SK-N-SH (cell line): ENCODE measurements at regions of chr15 and their contacts with region 1.

Region 1: GRCh38 chr15:86231864-86232721 is 152.4 kb downstream of the AGBL1 start:
- DNase-seq: peak; percentile 65
- H3K4me3 ChIP-seq: peak overlapping the region in 1 of 2 experiments; percentile 22; a peak in 1 of 4 replicates
- H3K27ac ChIP-seq: no peak overlapping the region
- H3K4me1 ChIP-seq: peaks cover 0 to 8% of the 10 kb centered on the region in 2 experiments; a peak in 1 of 4 replicates
- H3K27me3 ChIP-seq: no peaks in the 10 kb centered on the region
- CTCF ChIP-seq: peak; percentile 69
- EP300 ChIP-seq: no peak
- RAD21 ChIP-seq: peak; percentile 84

Region 2: GRCh38 chr15:85380217-85380811 is 851.8 kb before region 1 on chr15 and contains the start of gene AKAP13:
- CTCF ChIA-PET with region 1: no interaction called
- POLR2A ChIA-PET with region 1: no interaction called
- DNase-seq: peak; percentile 95
- H3K4me3 ChIP-seq: peak within 1 kb of the TSS; percentile 79 to 81
- H3K27ac ChIP-seq: peak within 1 kb of the TSS; percentile 87 to 92
- H3K4me1 ChIP-seq: peaks cover 6 to 12% of the 10 kb centered on the region in 2 experiments; a peak in 3 of 4 replicates
- H3K27me3 ChIP-seq: no peaks in the 10 kb centered on the region
- CTCF ChIP-seq: no peak
- EP300 ChIP-seq: peak in 1 of 2 experiments; percentile 33; a peak in 1 of 4 replicates
- RAD21 ChIP-seq: no peak
- polyA plus RNA-seq, gene AKAP13: 6.7 and 8.4 TPM in 2 replicates

Region 3: DNA sequence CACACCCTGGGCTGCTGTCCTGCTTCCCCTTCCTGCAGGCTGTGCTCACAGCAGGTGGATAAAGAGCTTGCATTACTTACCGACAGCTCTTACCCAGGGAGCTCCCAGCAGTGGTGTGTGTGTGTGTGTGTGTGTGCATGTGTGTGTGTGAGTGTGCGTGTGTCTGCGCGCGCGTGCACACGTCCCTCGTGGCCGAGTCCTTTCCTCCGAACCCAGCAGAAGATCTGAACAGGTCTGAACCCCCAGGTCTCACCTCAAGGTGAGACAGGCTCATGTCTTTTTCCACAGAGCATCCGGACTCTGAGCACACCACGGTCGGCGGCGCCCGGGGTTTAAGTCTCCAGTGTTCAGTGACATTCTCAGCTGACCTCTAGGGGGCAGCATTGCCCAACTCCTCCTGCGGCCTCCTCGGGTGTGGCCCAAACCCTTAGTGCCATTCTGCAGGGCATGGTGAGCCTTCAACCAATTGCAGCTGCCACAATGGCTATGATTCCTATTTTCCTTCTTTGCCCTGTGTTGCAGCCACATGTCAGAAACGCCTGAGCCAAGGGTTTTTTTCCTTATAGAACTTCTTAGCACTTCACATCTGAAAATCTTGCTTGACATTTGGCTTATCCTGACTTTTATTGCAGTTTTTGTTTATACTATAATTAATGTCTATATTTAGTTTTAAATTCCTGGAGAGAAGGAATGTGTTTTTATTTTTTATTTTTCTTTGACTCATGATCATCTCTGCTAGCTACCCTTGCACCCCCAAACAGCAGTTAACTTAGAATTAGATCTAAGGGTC is 373.3 kb before region 1 on chr15:
- CTCF ChIA-PET with region 1: interaction called, 21 read pairs
- POLR2A ChIA-PET with region 1: no interaction called
- DNase-seq: peak; percentile 83
- H3K4me3 ChIP-seq: peak overlapping the region in 1 of 2 experiments; percentile 48; a peak in 2 of 4 replicates
- H3K27ac ChIP-seq: no peak overlapping the region
- H3K4me1 ChIP-seq: peaks cover 0 to 2% of the 10 kb centered on the region in 2 experiments; a peak in 1 of 4 replicates
- H3K27me3 ChIP-seq: no peaks in the 10 kb centered on the region; the same call in 1 of the 2 replicates
- CTCF ChIP-seq: peak; percentile 86
- EP300 ChIP-seq: no peak
- RAD21 ChIP-seq: peak; percentile 76

Region 4: DNA sequence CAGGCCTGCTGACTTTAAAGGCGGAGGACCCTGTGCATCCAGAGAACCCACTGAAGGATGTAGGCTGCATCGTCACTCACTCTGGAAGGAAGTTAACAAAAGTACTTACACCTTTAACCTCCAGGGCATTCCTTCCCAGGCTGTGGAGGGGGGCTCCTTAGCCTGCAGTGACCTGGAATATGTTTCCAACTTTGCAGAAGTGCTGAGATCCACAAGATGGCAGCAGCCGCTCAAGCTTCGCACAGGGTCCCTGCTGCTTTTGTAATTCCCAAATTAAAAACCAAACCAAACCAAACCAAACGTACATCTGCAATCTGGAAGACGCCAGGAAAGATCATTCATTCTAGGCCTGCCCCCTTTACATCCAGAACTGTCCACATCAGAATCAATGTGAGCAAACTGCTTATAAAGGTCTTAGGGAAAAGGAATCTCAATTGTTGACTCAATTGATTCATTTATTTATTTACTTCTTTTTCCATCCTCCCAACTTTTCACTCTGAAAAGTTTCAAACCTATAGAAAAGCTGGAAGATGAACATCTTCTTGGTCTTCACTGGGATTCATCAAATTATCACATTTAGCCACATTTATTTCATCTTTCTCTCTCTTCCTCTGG is 366.9 kb before region 1 on chr15:
- CTCF ChIA-PET with region 1: interaction called, 21 read pairs
- POLR2A ChIA-PET with region 1: no interaction called
- DNase-seq: peak; percentile 71
- H3K4me3 ChIP-seq: peak overlapping the region in 1 of 2 experiments; percentile 34; a peak in 1 of 4 replicates
- H3K27ac ChIP-seq: no peak overlapping the region
- H3K4me1 ChIP-seq: no peaks in the 10 kb centered on the region
- H3K27me3 ChIP-seq: no peaks in the 10 kb centered on the region
- CTCF ChIP-seq: peak; percentile 86
- EP300 ChIP-seq: no peak
- RAD21 ChIP-seq: peak; percentile 98

Region 5: DNA sequence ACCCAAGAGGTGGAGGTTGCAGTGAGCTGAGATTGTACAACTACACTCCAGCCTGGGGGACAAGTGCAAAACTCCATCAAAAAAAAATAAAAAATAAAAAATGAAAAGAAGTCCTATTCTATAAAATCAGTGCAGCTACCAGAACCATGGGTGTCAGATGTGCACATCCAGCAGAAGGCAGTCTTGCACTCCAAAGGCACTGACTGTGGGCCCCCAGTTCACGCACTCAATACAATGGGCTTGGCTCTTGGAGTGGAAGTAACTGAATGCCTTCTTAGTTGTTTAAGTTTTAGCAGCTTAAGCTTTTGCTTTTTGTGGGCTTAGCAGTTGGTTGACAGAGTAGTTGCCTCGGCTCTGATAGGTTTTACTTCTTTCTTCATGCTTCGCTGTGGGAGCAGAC is 11.0 kb before region 1 on chr15:
- CTCF ChIA-PET with region 1: interaction called, 21 read pairs
- POLR2A ChIA-PET with region 1: no interaction called
- DNase-seq: no peak
- H3K4me3 ChIP-seq: no peak overlapping the region
- H3K27ac ChIP-seq: no peak overlapping the region
- H3K4me1 ChIP-seq: no peaks in the 10 kb centered on the region
- H3K27me3 ChIP-seq: no peaks in the 10 kb centered on the region; the same call in 1 of the 2 replicates
- CTCF ChIP-seq: no peak
- EP300 ChIP-seq: no peak
- RAD21 ChIP-seq: no peak

Region 6: GRCh38 chr15:86247249-86247955 is 15.3 kb after region 1 on chr15:
- CTCF ChIA-PET with region 1: interaction called, 23 read pairs
- POLR2A ChIA-PET with region 1: no interaction called
- DNase-seq: no peak
- H3K4me3 ChIP-seq: no peak overlapping the region
- H3K27ac ChIP-seq: no peak overlapping the region
- H3K4me1 ChIP-seq: no peaks in the 10 kb centered on the region
- H3K27me3 ChIP-seq: no peaks in the 10 kb centered on the region
- CTCF ChIP-seq: no peak
- EP300 ChIP-seq: no peak
- RAD21 ChIP-seq: no peak

Region 7: DNA sequence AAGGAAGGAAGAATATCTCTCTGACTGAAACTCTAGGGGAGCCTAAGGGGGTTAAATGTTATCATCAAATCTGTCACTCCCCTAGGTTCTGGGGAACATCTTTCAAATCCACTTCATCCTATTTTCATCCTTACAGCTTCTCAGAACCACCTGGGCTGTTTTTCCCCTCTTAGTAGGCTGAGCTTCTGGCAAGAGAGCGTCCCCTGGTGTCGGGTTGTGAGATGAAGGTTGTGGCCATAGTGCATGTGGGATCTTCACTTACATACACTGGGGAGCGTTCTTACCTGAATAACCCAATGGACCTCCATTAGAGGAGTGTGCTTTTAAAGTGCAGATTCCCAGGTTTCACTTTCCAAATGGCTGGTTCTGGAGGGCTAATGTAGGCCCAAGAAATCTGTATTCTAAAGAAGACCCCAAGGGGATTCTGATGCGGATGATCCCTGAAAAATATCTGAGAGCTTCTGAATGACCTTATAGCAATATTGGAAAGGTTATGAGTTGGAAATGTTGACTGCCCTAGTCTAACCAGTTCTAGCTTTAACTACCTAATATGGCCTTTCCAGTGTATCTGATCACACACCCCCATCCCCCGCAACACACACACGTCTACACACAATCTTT is 511.3 kb after region 1 on chr15:
- CTCF ChIA-PET with region 1: interaction called, 13 read pairs
- POLR2A ChIA-PET with region 1: no interaction called
- DNase-seq: peak; percentile 3
- H3K4me3 ChIP-seq: peak overlapping the region in 1 of 2 experiments; percentile 23; a peak in 1 of 4 replicates
- H3K27ac ChIP-seq: no peak overlapping the region
- H3K4me1 ChIP-seq: no peaks in the 10 kb centered on the region
- H3K27me3 ChIP-seq: no peaks in the 10 kb centered on the region
- CTCF ChIP-seq: peak; percentile 45; the same call in 1 of the 2 replicates
- EP300 ChIP-seq: no peak
- RAD21 ChIP-seq: peak; percentile 56